ENCODE measurements at regions of chr3 and their contacts with region 1.

Region 1: GRCh38 chr3:69324362-69325025 is 61.4 kb downstream of the FRMD4B start:
- DNase-seq: no peak
- ATAC-seq: no peak
- H3K4me3 ChIP-seq: no peak overlapping the region
- H3K27ac ChIP-seq: no peak overlapping the region
- H3K4me1 ChIP-seq: peaks cover 0 to 5% of the 10 kb centered on the region in 2 donors
- H3K27me3 ChIP-seq: no peaks in the 10 kb centered on the region

Region 2: DNA sequence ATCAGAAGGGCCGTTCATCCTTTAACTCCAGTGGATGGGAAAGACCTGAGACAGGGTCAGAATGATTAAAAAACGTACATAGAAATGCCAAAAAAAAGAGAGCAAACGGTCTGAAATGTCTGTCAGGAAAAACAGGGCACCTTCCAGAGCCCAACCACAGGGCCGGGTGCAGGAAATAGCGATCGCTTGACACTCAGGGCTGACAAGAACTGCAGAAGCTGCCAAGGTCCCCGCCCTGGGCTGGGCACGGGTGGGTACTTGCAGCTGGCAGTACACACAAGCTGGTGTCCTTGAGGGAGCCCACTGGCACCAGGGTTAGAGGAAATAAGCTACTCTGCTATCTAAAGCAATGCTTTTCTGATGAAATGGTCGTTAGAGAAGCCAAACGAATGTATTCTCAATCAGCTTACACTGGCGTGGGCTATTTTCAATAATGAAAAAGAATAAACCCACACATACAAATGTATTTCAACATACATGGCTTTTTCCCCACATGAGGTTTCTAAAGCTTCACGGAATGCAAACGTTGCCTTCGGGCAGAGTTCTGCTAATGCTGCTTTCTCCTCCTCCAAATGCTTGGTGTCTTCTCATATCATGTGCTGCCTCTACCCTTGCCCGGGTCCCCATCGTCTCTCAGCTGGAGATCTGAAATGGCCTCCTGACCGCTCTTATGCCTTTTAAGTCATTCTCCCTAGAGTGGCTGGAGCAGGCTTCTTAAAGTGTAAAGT is 45.8 kb after region 1 on chr3:
- intact Hi-C with region 1: loop called in 1 of 2 experiments (anchors 5 kb)
- DNase-seq: peak; percentile 85 to 92
- ATAC-seq: peak; percentile 64
- H3K4me3 ChIP-seq: no peak overlapping the region
- H3K27ac ChIP-seq: peak overlapping the region; percentile 66 to 82
- H3K4me1 ChIP-seq: peaks cover 3% of the 10 kb centered on the region in 2 donors
- H3K27me3 ChIP-seq: no peaks in the 10 kb centered on the region